B cell (primary cell): ENCODE measurements at regions of chr17 and their contacts with region 1.

Region 1: GRCh38 chr17:16438557-16439302 is 23.4 kb downstream of the TRPV2 start:
- DNase-seq: peak; percentile 97
- ATAC-seq: peak; percentile 84
- H3K4me3 ChIP-seq: peak overlapping the region; percentile 87 to 94 (median 88)
- H3K4me3 Mint-ChIP-seq: peak overlapping the region; percentile 99
- H3K27ac ChIP-seq: peak overlapping the region; percentile 68 to 92
- H3K27ac Mint-ChIP-seq: peak overlapping the region; percentile 96
- H3K4me1 ChIP-seq: peaks cover 16 to 26% of the 10 kb centered on the region in 2 donors
- H3K4me1 Mint-ChIP-seq: peaks cover 43% of the 10 kb centered on the region
- H3K27me3 ChIP-seq: no peaks in the 10 kb centered on the region
- H3K27me3 Mint-ChIP-seq: no peaks in the 10 kb centered on the region
- CTCF ChIP-seq: no peak

Region 2: DNA sequence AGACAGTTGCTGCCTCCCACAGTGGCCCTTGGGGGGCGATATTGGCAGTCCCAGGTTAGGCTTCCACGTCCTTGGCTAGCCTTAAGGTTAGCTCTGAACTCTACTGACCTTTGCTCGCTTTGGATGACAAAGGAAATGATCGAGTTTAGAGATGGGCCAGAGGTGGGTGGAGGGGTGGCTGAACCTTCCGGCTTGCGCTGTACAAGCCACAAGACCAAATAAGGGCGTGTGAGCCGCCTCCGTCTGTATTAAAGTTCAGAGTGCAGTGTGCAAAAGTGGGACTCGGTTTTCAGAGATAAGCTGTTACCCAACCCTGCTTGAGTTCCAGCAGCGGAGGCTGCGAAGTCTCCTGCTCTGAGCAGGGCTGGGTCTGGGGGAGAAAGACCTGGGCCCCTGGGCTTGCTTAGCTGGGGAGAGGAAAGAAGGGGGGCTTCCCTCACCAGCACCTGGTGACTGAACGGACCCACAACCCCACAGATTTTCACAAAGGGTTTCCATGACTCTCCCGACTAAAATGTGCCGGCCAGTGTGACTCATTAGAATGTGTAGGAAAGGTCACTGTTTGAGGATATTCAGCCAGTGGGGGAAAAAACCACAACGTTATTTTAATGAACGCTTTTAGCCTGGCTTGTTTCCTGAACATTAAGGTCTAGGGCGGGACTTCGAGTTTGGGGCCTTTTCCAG is 152.6 kb before region 1 on chr17:
- CTCF ChIA-PET with region 1: no interaction called
- POLR2A ChIA-PET with region 1: no interaction called
- intact Hi-C with region 1: loop called (anchors 2 kb)
- DNase-seq: peak; percentile 74
- ATAC-seq: peak; percentile 66
- H3K4me3 ChIP-seq: peak overlapping the region in 4 of 5 experiments; percentile 5 to 61 (median 44)
- H3K4me3 Mint-ChIP-seq: peak overlapping the region; percentile 86
- H3K27ac ChIP-seq: peak overlapping the region; percentile 91 to 94
- H3K27ac Mint-ChIP-seq: peak overlapping the region; percentile 98
- H3K4me1 ChIP-seq: peaks cover 59 to 63% of the 10 kb centered on the region in 2 donors
- H3K4me1 Mint-ChIP-seq: peaks cover 56% of the 10 kb centered on the region
- H3K27me3 ChIP-seq: no peaks in the 10 kb centered on the region
- H3K27me3 Mint-ChIP-seq: no peaks in the 10 kb centered on the region
- CTCF ChIP-seq: peak; percentile 47

Region 3: GRCh38 chr17:16380640-16381495 is 57.9 kb before region 1 on chr17 and contains the start of gene UBB:
- CTCF ChIA-PET with region 1: interaction called, 19 read pairs
- POLR2A ChIA-PET with region 1: interaction called, 30 read pairs
- intact Hi-C with region 1: loop called (anchors 1 kb)
- DNase-seq: peak; percentile 97
- ATAC-seq: peak; percentile 89
- H3K4me3 ChIP-seq: peak within 1 kb of the TSS; percentile 73 to 96 (median 91)
- H3K4me3 Mint-ChIP-seq: peak within 1 kb of the TSS; percentile 84
- H3K27ac ChIP-seq: peak within 1 kb of the TSS; percentile 97 to 98
- H3K27ac Mint-ChIP-seq: peak within 1 kb of the TSS; percentile 97
- H3K4me1 ChIP-seq: peaks cover 32 to 43% of the 10 kb centered on the region in 2 donors
- H3K4me1 Mint-ChIP-seq: peaks cover 45% of the 10 kb centered on the region
- H3K27me3 ChIP-seq: no peaks in the 10 kb centered on the region
- H3K27me3 Mint-ChIP-seq: no peaks in the 10 kb centered on the region
- CTCF ChIP-seq: no peak
- total RNA-seq, gene UBB: 765 and 769 TPM in 2 replicates

Region 4: GRCh38 chr17:16428098-16428882 is 10.4 kb before region 1 on chr17:
- CTCF ChIA-PET with region 1: interaction called, 17 read pairs
- POLR2A ChIA-PET with region 1: interaction called, 3 read pairs
- intact Hi-C with region 1: no loop called
- DNase-seq: no peak
- ATAC-seq: peak; percentile 67
- H3K4me3 ChIP-seq: no peak overlapping the region
- H3K4me3 Mint-ChIP-seq: no peak overlapping the region
- H3K27ac ChIP-seq: no peak overlapping the region
- H3K27ac Mint-ChIP-seq: no peak overlapping the region
- H3K4me1 ChIP-seq: no peaks in the 10 kb centered on the region
- H3K4me1 Mint-ChIP-seq: no peaks in the 10 kb centered on the region
- H3K27me3 ChIP-seq: no peaks in the 10 kb centered on the region
- H3K27me3 Mint-ChIP-seq: no peaks in the 10 kb centered on the region
- CTCF ChIP-seq: peak; percentile 39

Region 5: GRCh38 chr17:16537130-16537458 is 98.4 kb after region 1 on chr17:
- CTCF ChIA-PET with region 1: interaction called, 7 read pairs
- POLR2A ChIA-PET with region 1: interaction called, 9 read pairs
- intact Hi-C with region 1: loop called (anchors 5 kb)
- DNase-seq: no peak
- ATAC-seq: no peak
- H3K4me3 ChIP-seq: no peak overlapping the region
- H3K4me3 Mint-ChIP-seq: peak overlapping the region; percentile 98
- H3K27ac ChIP-seq: no peak overlapping the region
- H3K27ac Mint-ChIP-seq: peak overlapping the region; percentile 99
- H3K4me1 ChIP-seq: peaks cover 9 to 13% of the 10 kb centered on the region in 2 donors
- H3K4me1 Mint-ChIP-seq: peaks cover 18% of the 10 kb centered on the region
- H3K27me3 ChIP-seq: no peaks in the 10 kb centered on the region
- H3K27me3 Mint-ChIP-seq: no peaks in the 10 kb centered on the region
- CTCF ChIP-seq: no peak